B cell (primary cell): ENCODE measurements at regions of chr6 and their contacts with region 1.

Region 1: DNA sequence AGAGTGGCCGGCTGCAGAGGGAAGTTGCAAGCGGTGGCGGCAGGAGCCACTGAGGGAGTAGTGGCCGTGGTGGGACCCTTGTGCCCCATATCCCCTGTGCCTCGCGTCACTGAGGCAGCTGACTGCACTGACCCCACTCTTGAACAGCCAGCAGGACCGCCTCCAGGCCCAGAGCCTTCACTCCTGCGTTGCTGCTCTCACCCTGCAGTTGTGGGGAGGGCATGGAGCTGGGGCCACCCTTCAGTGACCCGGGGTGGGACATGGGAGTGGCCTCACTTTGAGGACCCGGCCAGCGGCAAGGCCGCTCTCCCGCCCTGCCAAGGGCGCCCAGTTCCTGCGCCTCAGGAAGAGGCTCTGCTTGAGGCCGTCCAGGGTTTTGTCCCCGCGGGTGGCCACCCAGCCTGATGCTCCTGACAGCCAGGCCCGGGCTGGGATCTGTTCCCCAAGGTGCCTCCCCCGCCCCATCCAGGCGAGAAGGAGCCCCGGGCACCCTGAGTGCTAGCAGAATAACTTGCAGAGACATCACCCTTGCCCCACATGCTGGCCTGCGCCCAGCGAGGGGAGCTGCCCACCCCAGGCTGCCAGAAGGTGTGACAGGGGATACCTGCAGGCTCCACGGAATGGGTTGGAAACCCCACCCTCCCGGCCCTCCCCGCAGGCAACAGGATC is 44.4 kb downstream of the HLA-DRA start:
- DNase-seq: no peak
- ATAC-seq: no peak
- H3K4me3 ChIP-seq: no peak overlapping the region
- H3K4me3 Mint-ChIP-seq: no peak overlapping the region
- H3K27ac ChIP-seq: no peak overlapping the region
- H3K27ac Mint-ChIP-seq: no peak overlapping the region
- H3K4me1 ChIP-seq: peaks cover 4 to 5% of the 10 kb centered on the region in 2 donors
- H3K4me1 Mint-ChIP-seq: peaks cover 29% of the 10 kb centered on the region
- H3K27me3 ChIP-seq: no peaks in the 10 kb centered on the region
- H3K27me3 Mint-ChIP-seq: no peaks in the 10 kb centered on the region
- CTCF ChIP-seq: no peak

Region 2: GRCh38 chr6:32576250-32576649 is 92.1 kb after region 1 on chr6:
- CTCF ChIA-PET with region 1: no interaction called
- POLR2A ChIA-PET with region 1: no interaction called
- intact Hi-C with region 1: loop called (anchors 10 kb)
- DNase-seq: no peak
- ATAC-seq: no peak
- H3K4me3 ChIP-seq: no peak overlapping the region
- H3K4me3 Mint-ChIP-seq: no peak overlapping the region
- H3K27ac ChIP-seq: no peak overlapping the region
- H3K27ac Mint-ChIP-seq: peak overlapping the region; percentile 81
- H3K4me1 ChIP-seq: peaks cover 0 to 5% of the 10 kb centered on the region in 2 donors
- H3K4me1 Mint-ChIP-seq: peaks cover 23% of the 10 kb centered on the region
- H3K27me3 ChIP-seq: no peaks in the 10 kb centered on the region
- H3K27me3 Mint-ChIP-seq: no peaks in the 10 kb centered on the region
- CTCF ChIP-seq: no peak